MCF 10A (cell line): ENCODE measurements at regions of chr1 and their contacts with region 1.

Region 1: DNA sequence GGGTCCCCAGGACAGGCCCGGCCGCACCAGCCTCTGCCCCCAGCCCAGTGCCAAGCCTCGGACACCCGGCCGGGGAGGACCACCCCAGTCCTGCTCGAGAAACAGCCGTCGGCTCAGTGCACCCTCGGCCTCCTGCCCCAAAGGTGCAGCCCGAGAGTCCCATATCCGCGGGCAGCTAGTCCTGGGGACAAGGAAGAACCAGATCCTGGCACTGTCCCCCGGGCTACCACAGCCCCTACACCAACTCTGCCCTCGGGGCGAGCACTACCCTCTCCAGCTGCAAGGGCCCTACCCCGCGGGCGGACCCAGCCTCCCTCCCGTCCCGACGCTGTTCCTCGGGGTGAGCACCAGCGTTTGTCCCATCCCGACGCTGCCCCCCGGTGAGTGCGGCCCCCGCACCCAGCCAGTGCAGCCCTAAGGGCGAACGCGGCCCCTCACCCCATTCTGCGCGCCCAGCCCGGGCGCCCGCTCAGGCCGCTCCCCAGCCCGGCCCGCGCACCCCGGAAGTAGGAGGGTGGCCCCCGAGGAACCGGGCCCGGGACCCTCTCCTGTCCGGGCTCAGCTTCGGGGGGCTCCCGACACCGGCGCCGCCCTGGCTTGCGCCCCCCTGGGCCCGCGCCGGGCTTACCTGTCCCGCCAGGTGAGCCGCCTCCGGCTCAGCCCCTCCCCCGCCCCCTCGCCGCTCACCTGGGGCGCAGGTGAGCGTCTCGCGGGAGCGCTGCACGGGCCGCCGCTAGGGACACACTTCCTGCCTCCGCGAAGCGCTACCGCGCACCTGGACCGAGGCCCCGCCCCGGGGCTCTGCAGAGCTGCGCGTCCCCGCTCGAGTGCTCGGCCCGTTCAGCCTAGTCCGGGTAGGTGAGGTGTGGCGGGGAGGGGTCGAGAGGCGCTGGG is at the start of gene KDF1:
- DNase-seq: peak; percentile 80
- H3K4me3 Mint-ChIP-seq: peak within 1 kb of the TSS; percentile 91
- H3K27ac Mint-ChIP-seq: peak within 1 kb of the TSS; percentile 85
- H3K4me1 Mint-ChIP-seq: peaks cover 36% of the 10 kb centered on the region
- H3K27me3 Mint-ChIP-seq: no peaks in the 10 kb centered on the region
- CTCF ChIP-seq: peak; percentile 15
- total RNA-seq, gene KDF1: 5.1 and 8.8 TPM in 2 replicates

Region 2: DNA sequence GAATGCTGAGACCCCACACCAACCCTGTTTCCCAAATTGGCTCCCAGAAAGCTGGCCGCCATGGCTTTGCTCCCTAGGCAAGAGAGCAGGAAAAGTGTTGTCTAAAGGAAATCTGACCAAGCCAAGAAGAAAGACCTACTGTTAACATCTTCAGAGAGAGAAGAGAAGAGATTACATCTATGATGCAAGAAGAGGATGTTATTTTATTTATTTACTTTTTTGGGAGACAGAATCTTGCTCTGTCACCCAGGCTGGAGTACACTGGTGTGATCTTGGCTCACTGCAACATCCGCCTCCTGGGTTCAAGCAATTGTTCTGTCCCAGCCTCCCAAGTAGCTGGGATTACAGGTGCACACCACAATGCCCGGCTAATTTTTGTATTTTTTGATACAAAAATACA is 466.0 kb before region 1 on chr1:
- CTCF ChIA-PET with region 1: no interaction called
- POLR2A ChIA-PET with region 1: no interaction called
- intact Hi-C with region 1: no loop called
- DNase-seq: no peak
- H3K4me3 Mint-ChIP-seq: no peak overlapping the region
- H3K27ac Mint-ChIP-seq: no peak overlapping the region
- H3K4me1 Mint-ChIP-seq: no peaks in the 10 kb centered on the region
- H3K27me3 Mint-ChIP-seq: no peaks in the 10 kb centered on the region
- CTCF ChIP-seq: no peak

Region 3: DNA sequence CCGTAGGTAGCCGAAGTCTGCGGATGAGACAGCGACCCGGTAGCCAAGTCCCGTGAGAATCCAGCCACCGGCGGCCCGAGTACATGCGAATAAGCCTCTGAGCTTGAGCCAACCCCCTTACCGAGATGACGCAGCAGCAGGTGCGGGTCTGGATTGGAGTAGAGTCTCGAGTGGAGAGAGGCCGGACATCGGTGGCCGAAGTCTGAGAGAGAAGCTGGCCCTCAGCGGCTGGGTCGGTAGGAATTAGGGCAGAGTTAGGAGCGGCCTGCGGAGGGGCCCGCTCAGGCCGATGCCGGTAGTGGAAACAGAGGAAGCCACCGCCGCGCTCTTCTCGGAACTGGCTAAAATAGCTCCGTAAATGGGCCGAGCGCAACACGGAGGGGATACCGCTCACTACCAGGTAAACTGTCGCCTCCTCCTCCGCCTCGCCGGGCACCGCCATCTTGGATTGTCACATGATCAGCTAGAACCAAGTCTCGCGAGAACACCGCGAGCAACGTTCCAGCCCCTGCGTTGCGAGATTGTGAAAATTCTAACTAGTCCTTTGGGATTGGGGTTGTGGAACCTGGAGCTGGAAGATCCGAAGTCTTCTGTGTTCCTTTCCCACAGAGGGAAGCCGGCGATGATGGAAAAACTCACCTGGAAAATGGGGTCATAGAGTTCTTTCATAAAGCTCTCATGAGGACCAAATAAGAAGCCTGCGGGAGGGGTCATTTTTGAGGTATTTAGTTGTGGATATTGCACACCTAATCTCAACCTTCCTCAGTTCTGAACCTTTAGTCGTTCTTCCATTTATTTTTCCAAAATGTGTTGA is 59.8 kb before region 1 on chr1 and contains the start of gene GPATCH3:
- CTCF ChIA-PET with region 1: no interaction called
- POLR2A ChIA-PET with region 1: interaction called, 47 read pairs
- intact Hi-C with region 1: no loop called
- DNase-seq: peak; percentile 94
- H3K4me3 Mint-ChIP-seq: peak within 1 kb of the TSS; percentile 90
- H3K27ac Mint-ChIP-seq: peak within 1 kb of the TSS; percentile 98
- H3K4me1 Mint-ChIP-seq: peaks cover 15% of the 10 kb centered on the region
- H3K27me3 Mint-ChIP-seq: no peaks in the 10 kb centered on the region
- CTCF ChIP-seq: no peak
- total RNA-seq, gene GPATCH3: 9.9 and 14.1 TPM in 2 replicates

Region 4: GRCh38 chr1:26949926-26950319 is 10.0 kb before region 1 on chr1:
- CTCF ChIA-PET with region 1: no interaction called
- POLR2A ChIA-PET with region 1: interaction called, 18 read pairs
- intact Hi-C with region 1: no loop called
- DNase-seq: peak; percentile 30
- H3K4me3 Mint-ChIP-seq: no peak overlapping the region
- H3K27ac Mint-ChIP-seq: peak overlapping the region; percentile 54
- H3K4me1 Mint-ChIP-seq: peaks cover 5% of the 10 kb centered on the region
- H3K27me3 Mint-ChIP-seq: no peaks in the 10 kb centered on the region
- CTCF ChIP-seq: no peak

Region 5: GRCh38 chr1:26993237-26994019 is 33.5 kb after region 1 on chr1 and contains the start of gene TRNP1:
- CTCF ChIA-PET with region 1: interaction called, 5 read pairs
- POLR2A ChIA-PET with region 1: interaction called, 160 read pairs
- intact Hi-C with region 1: no loop called
- DNase-seq: peak; percentile 81
- H3K4me3 Mint-ChIP-seq: peak within 1 kb of the TSS; percentile 80
- H3K27ac Mint-ChIP-seq: peak within 1 kb of the TSS; percentile 92
- H3K4me1 Mint-ChIP-seq: peaks cover 45% of the 10 kb centered on the region
- H3K27me3 Mint-ChIP-seq: no peaks in the 10 kb centered on the region
- CTCF ChIP-seq: no peak
- total RNA-seq, gene TRNP1: 56.3 and 59.2 TPM in 2 replicates